Activated T-helper 2 cell treated with anti-CD3 and anti-CD28 coated beads, Interferon-gamma antibody, Interleukin-2, Interleukin-4, amounts not matched to agents 10 μg/mL and 5 μg/mL and 100 μg/mL, durations not matched to agents 14 hours and 24 hours and 36 hours (primary cell): ENCODE measurements at regions of chr2 and their contacts with region 1.

Region 1: GRCh38 chr2:102366406-102367112 is 11.0 kb downstream of the IL18R1 start:
- DNase-seq: no peak
- H3K4me3 Mint-ChIP-seq: peak overlapping the region; percentile 63
- H3K27ac Mint-ChIP-seq: peak overlapping the region; percentile 96
- H3K4me1 Mint-ChIP-seq: peaks cover 78% of the 10 kb centered on the region
- H3K27me3 Mint-ChIP-seq: no peaks in the 10 kb centered on the region

Region 2: GRCh38 chr2:101710471-101711318 is 655.9 kb before region 1 on chr2:
- intact Hi-C with region 1: loop called (anchors 10 kb)
- DNase-seq: no peak
- H3K4me3 Mint-ChIP-seq: no peak overlapping the region
- H3K27ac Mint-ChIP-seq: no peak overlapping the region
- H3K4me1 Mint-ChIP-seq: peaks cover 48% of the 10 kb centered on the region
- H3K27me3 Mint-ChIP-seq: no peaks in the 10 kb centered on the region

Region 3: GRCh38 chr2:101998896-101999789 is 367.4 kb before region 1 on chr2:
- intact Hi-C with region 1: loop called (anchors 1 kb)
- DNase-seq: no peak
- H3K4me3 Mint-ChIP-seq: no peak overlapping the region
- H3K27ac Mint-ChIP-seq: peak overlapping the region; percentile 68
- H3K4me1 Mint-ChIP-seq: peaks cover 26% of the 10 kb centered on the region
- H3K27me3 Mint-ChIP-seq: no peaks in the 10 kb centered on the region

Region 4: DNA sequence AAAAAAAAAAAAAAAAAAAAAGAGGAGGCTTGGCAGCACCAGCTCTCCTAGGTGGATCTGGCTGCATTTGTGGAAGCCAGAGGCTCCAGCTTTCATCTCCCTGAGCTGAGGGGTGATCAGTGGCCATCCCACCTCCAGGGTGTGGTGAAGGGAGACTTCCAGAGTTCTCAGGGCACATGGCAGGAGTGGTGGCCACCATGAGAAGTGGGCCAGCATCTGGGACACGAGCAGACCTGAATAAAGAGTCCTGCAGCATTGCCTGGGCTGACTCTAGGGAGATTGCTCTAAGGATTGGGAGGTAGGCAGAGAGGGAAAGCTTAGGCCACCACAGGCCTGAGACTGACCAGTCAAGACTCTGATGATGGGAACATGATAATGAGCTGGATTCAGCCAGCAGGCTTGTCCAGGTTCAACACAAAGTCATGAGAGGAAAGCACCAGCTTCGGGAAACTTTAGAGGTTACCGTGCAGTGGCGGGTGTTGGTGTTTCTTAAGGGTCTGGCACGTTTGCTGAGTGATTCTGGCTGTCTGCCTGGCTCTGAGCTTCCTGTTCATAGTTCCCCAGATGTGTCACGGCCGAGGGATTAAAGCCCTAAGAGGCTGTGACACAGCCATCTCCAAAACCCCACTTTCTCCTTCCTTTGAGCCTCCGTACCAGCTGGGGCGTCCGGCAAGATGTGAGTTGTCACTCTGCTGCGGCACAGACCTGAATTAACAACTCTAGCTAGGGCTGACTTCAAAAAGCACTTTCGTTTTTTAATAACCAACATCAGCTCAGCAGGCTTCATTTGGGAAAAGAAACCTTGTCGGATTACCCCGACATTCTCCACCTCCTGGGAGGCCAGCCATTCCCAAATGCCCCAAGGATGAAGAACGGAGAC is 262.3 kb before region 1 on chr2:
- intact Hi-C with region 1: loop called (anchors 5 kb)
- DNase-seq: no peak
- H3K4me3 Mint-ChIP-seq: peak overlapping the region; percentile 67
- H3K27ac Mint-ChIP-seq: no peak overlapping the region
- H3K4me1 Mint-ChIP-seq: peaks cover 25% of the 10 kb centered on the region
- H3K27me3 Mint-ChIP-seq: peaks cover 50% of the 10 kb centered on the region

Region 5: GRCh38 chr2:102258386-102259074 is 108.0 kb before region 1 on chr2:
- intact Hi-C with region 1: loop called (anchors 1 kb)
- DNase-seq: peak; percentile 26
- H3K4me3 Mint-ChIP-seq: peak overlapping the region; percentile 40
- H3K27ac Mint-ChIP-seq: peak overlapping the region; percentile 98
- H3K4me1 Mint-ChIP-seq: peaks cover 47% of the 10 kb centered on the region
- H3K27me3 Mint-ChIP-seq: no peaks in the 10 kb centered on the region

Region 6: DNA sequence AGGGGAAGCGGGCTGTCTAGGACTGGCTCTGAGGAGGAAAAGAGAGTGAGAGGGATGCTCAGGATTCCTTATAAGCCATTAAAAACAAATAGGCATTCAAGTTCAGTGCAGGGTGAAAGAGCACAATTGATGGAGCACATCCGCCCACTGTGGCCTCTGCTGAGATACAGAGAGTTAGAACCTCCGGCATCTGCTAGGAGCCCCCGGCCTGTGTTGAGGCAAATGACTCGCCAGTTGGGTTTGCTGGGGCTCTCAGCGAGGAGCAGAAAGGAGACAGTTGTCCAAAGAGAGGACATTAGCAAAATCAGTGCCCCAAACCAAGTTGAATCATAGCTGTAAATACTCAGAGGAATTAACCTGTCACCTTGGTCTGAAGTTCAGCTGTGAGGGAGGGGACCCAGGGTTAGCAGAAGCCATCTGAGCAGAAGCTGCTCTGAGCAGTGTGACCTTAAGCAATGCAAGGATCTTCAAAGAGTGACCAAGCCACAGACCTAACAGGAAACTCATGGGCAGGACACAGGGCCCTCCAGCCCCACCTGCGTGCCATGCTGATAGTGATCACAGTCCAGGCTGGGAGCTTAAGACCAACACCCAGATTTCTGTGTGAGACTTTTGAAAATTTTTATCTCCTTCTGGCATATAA is 33.1 kb after region 1 on chr2:
- intact Hi-C with region 1: no loop called
- DNase-seq: no peak
- H3K4me3 Mint-ChIP-seq: no peak overlapping the region
- H3K27ac Mint-ChIP-seq: no peak overlapping the region
- H3K4me1 Mint-ChIP-seq: peaks cover 30% of the 10 kb centered on the region
- H3K27me3 Mint-ChIP-seq: no peaks in the 10 kb centered on the region

Region 7: DNA sequence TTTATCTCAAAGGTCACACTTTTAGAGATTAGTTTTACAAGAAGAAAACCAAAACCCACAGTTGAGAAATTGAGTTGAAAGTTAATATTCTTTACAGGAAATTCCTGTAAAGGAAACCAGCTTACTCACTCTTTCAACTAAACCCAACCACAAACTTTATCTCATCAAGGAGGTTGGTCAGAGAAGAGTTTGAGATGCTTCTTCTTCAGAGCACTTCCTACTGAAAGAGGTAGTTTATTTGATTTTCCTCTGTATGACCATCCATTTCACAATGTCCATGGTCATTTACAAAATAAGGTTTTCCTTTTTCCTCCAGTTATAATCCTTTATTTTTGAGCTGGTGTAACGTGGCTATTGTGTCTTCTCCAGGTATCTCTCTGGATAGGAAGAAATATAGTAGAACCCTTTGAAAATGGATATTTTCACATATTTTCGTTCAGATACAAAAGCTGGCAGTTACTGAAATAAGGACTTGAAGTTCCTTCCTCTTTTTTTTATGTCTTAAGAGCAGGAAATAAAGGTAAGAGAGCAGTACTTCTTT is 51.9 kb after region 1 on chr2:
- intact Hi-C with region 1: loop called (anchors 1 kb)
- DNase-seq: no peak
- H3K4me3 Mint-ChIP-seq: peak overlapping the region; percentile 73
- H3K27ac Mint-ChIP-seq: peak overlapping the region; percentile 75
- H3K4me1 Mint-ChIP-seq: peaks cover 69% of the 10 kb centered on the region
- H3K27me3 Mint-ChIP-seq: peaks cover 3% of the 10 kb centered on the region